Esophagus muscularis mucosa (tissue), 4 donors: ENCODE measurements at regions of chr16 and their contacts with region 1.

Region 1: DNA sequence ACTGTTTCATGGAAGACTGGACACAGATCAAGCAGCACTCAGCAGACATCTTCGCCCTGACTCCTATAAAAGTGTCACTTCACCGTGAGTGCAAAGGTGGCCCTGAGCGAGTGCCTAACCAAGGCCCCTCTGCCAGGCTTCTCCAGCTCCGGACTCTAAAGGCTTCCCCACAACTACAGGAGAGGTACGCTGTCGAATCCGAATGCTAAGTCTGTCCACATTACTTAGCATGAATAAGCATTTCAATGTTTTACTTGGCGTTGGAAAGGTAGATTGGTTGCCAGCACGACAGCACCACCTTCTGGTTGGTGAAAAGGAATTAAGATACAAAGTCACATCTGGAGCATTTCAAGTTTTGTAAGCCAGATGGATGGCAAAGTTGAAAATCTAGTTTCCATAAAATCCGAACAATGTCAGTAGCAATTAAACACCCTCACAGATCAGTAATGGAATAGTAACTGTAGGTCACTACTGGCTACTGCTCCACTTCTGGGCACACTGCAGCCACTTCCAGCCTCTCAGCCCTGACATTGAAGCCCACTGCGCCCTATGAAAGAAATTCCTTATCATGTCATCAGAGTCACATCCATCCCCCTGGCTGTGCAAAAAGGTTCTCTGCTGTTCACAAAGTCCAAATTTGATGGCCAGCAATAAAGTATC is 100.9 kb downstream of the PARN start:
- DNase-seq: peak; percentile 95
- H3K4me3 ChIP-seq: peak overlapping the region; percentile 35 to 51 (median 38)
- H3K27ac ChIP-seq: peak overlapping the region; percentile 46 to 67 (median 65)
- H3K4me1 ChIP-seq: peaks cover 17 to 35% (median 31%) of the 10 kb centered on the region in 4 donors
- H3K27me3 ChIP-seq: no peaks in the 10 kb centered on the region
- CTCF ChIP-seq: peak; percentile 71 to 83 (median 82)
- EP300 ChIP-seq: no peak
- POLR2A ChIP-seq: no peak

Region 2: GRCh38 chr16:14249291-14250032 is 279.7 kb before region 1 on chr16:
- intact Hi-C with region 1: loop called (anchors 2 kb)
- DNase-seq: peak; percentile 66
- H3K4me3 ChIP-seq: no peak overlapping the region
- H3K27ac ChIP-seq: no peak overlapping the region
- H3K4me1 ChIP-seq: peaks cover 0 to 4% (median 0%) of the 10 kb centered on the region in 4 donors
- H3K27me3 ChIP-seq: no peaks in the 10 kb centered on the region
- CTCF ChIP-seq: peak; percentile 67 to 87 (median 80)
- EP300 ChIP-seq: no peak
- POLR2A ChIP-seq: no peak

Region 3: GRCh38 chr16:14300705-14301168 is 228.4 kb before region 1 on chr16:
- intact Hi-C with region 1: loop called (anchors 1 kb)
- DNase-seq: no peak
- H3K4me3 ChIP-seq: peak overlapping the region; percentile 99
- H3K27ac ChIP-seq: peak overlapping the region; percentile 90 to 94 (median 92)
- H3K4me1 ChIP-seq: peaks cover 17 to 41% (median 34%) of the 10 kb centered on the region in 4 donors
- H3K27me3 ChIP-seq: no peaks in the 10 kb centered on the region
- CTCF ChIP-seq: peak; percentile 70 to 87 (median 72)
- EP300 ChIP-seq: no peak
- POLR2A ChIP-seq: no peak